GM18951 (cell line): ENCODE measurements at regions of chr9 and their contacts with region 1.

Region 1: DNA sequence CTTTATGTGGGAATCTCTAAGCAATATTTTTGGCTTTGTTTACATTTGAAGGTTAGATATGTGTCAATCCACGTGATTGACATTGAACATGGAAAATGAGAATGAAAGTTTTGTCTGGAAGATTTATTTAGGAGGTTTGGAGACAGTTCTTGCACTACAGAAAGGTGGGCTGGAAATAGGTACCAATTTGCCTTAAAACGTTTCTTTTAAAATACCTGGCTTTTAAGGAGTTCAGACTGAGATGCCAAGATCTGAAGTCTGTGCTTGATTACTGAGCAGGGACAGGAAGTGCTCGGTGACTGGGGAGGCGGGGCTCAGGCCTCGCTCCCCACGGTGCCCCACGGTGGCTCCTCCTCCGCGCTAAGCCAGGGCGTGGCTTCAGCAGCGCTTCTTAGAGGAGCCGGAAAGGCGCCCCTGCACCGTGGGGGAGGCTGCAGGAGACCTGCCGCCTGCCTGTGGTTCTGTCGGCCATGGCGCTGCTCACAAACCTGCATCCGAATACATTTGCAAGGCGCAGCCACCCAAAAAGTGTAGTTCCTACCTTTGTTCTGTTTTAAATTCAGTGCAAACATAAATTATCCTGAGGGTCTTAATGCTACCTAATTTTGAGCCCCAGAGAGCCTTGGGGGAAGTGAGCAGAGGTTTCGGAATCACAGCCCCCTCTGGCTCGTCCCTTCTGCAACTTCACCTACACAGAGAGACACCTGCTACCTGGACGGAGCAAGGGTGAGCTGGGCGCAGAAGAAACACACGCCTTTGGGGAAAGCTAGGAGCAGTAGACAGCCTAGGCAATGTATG is 49.2 kb downstream of the USP20 start:
- POLR2A ChIP-seq: peak; percentile 79

Region 2: DNA sequence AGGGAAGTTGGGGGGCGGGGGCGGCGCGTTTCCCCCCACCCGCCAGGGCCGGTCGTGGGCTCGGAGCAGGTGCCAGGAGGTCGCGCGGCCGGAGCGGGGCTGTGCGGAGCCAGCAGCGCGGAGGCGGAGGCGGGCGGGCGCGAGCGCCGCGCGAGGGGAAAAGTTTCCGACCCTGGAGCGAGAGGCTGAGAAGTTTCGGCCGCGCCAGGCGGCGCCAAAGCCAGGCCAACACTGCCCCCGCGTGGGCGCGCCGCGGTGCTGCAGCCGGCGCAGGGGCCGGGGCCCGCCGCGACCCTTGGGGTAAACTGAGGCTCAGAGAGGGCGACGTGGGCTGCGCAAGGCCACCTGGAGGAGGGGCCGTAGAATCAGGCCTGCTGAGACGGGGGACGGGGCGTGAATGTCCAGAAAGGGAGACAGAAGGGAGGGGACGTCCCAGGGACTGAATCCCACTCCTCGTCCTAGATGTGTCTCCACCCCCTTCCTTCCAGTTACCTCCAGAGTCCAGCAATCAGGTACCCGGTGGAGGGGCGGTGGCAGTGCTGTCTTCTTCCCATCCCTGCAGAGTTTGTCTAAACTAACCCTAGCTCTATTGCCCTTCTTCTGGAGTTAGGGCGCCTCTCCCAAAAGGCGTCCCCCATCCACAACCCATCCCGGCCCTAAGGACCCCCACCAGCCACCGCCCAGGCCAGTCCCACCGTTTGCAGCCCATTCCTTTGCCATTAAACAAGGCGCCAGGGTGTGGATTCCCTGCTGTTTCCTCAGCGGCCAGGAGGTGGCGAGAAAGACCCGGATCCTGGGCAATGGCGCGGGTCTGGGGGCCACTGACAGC is 273.7 kb before region 1 on chr9:
- in situ Hi-C with region 1: no loop called
- POLR2A ChIP-seq: no peak

Region 3: GRCh38 chr9:130090915-130091314 is 206.5 kb after region 1 on chr9:
- in situ Hi-C with region 1: loop called (anchors 10 kb)
- POLR2A ChIP-seq: no peak